K562 (cell line): ENCODE measurements at regions of chr3 and their contacts with region 1.

Region 1: GRCh38 chr3:45593708-45594609 is 592 bp upstream of the LIMD1 start:
- DNase-seq: peak; percentile 85 to 95 (median 94)
- ATAC-seq: peak; percentile 90
- H3K4me3 ChIP-seq: peak overlapping the region; percentile 71
- H3K27ac ChIP-seq: peak overlapping the region; percentile 83
- H3K4me1 ChIP-seq: peaks cover 34 to 57% of the 10 kb centered on the region in 2 experiments; a peak in 4 of 5 replicates
- H3K27me3 ChIP-seq: peaks cover 3 to 18% of the 10 kb centered on the region in 2 experiments; a peak in 3 of 5 replicates
- CTCF ChIP-seq: no peak
- EP300 ChIP-seq: no peak
- POLR2A ChIP-seq: peak; percentile 68
- RAD21 ChIP-seq: no peak

Region 2: GRCh38 chr3:45507820-45508317 is 86.1 kb before region 1 on chr3:
- CTCF ChIA-PET with region 1: interaction called, 4 read pairs
- POLR2A ChIA-PET with region 1: no interaction called
- in situ Hi-C with region 1: no loop called
- intact Hi-C with region 1: loop called (anchors 5 kb)
- DNase-seq: peak in 3 of 4 experiments; percentile 39 to 59 (median 55)
- ATAC-seq: peak; percentile 89
- H3K4me3 ChIP-seq: no peak overlapping the region
- H3K27ac ChIP-seq: no peak overlapping the region
- H3K4me1 ChIP-seq: 0 out of 5 replicates have a peak, but pooled peaks cover 0 to 6% of the 10 kb centered on the region in 2 experiments
- H3K27me3 ChIP-seq: no peaks in the 10 kb centered on the region
- CTCF ChIP-seq: peak; percentile 59 to 70 (median 62)
- EP300 ChIP-seq: no peak
- POLR2A ChIP-seq: no peak
- RAD21 ChIP-seq: peak; percentile 67 to 80

Region 3: GRCh38 chr3:45546716-45547701 is 47.0 kb before region 1 on chr3:
- CTCF ChIA-PET with region 1: no interaction called
- POLR2A ChIA-PET with region 1: interaction called, 6 read pairs
- in situ Hi-C with region 1: no loop called
- intact Hi-C with region 1: loop called (anchors 2 kb)
- DNase-seq: peak; percentile 74 to 86 (median 78)
- ATAC-seq: peak; percentile 52
- H3K4me3 ChIP-seq: no peak overlapping the region
- H3K27ac ChIP-seq: peak overlapping the region; percentile 74; the same call in 2 of the 3 replicates
- H3K4me1 ChIP-seq: peaks cover 25 to 51% of the 10 kb centered on the region in 2 experiments
- H3K27me3 ChIP-seq: no peaks in the 10 kb centered on the region
- CTCF ChIP-seq: peak; percentile 75 to 92 (median 85)
- EP300 ChIP-seq: no peak
- POLR2A ChIP-seq: no peak
- RAD21 ChIP-seq: peak in 1 of 2 experiments; percentile 66; a peak in 2 of 4 replicates

Region 4: DNA sequence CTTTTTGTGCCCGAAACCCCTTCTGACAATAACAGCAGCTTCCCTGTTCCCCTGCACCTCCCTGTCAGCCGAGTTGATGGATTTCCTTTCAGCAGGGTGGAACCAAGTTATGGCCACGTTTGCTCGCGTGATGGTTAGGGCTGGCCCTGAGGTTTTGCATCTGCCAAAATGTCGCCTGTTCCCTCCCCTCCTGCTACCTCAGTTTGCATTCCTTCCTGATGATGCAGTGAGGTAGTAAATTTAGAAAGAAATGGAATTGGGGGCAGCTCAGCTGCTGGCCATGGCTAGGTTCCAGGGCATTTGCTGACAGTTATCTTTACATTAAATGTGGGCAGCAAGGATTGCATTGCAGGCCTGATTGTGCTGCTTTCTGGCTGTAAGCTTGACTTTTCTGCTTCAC is 13.8 kb after region 1 on chr3:
- CTCF ChIA-PET with region 1: no interaction called
- POLR2A ChIA-PET with region 1: interaction called, 20 read pairs
- in situ Hi-C with region 1: no loop called
- intact Hi-C with region 1: no loop called
- DNase-seq: no peak
- ATAC-seq: no peak
- H3K4me3 ChIP-seq: no peak overlapping the region
- H3K27ac ChIP-seq: no peak overlapping the region
- H3K4me1 ChIP-seq: peaks cover 0 to 6% of the 10 kb centered on the region in 2 experiments; a peak in 1 of 5 replicates
- H3K27me3 ChIP-seq: no peaks in the 10 kb centered on the region
- CTCF ChIP-seq: no peak
- EP300 ChIP-seq: no peak
- POLR2A ChIP-seq: no peak
- RAD21 ChIP-seq: no peak

Region 5: GRCh38 chr3:45642731-45643152 is 48.8 kb after region 1 on chr3:
- CTCF ChIA-PET with region 1: no interaction called
- POLR2A ChIA-PET with region 1: interaction called, 4 read pairs
- in situ Hi-C with region 1: no loop called
- intact Hi-C with region 1: loop called (anchors 5 kb)
- DNase-seq: no peak
- ATAC-seq: no peak
- H3K4me3 ChIP-seq: no peak overlapping the region
- H3K27ac ChIP-seq: no peak overlapping the region
- H3K4me1 ChIP-seq: peaks cover 8 to 23% of the 10 kb centered on the region in 2 experiments
- H3K27me3 ChIP-seq: no peaks in the 10 kb centered on the region
- CTCF ChIP-seq: no peak
- EP300 ChIP-seq: no peak
- POLR2A ChIP-seq: no peak
- RAD21 ChIP-seq: no peak

Region 6: GRCh38 chr3:45701172-45701867 is 107.4 kb after region 1 on chr3:
- CTCF ChIA-PET with region 1: no interaction called
- POLR2A ChIA-PET with region 1: no interaction called
- in situ Hi-C with region 1: no loop called
- intact Hi-C with region 1: no loop called
- DNase-seq: no peak
- ATAC-seq: no peak
- H3K4me3 ChIP-seq: no peak overlapping the region
- H3K27ac ChIP-seq: no peak overlapping the region
- H3K4me1 ChIP-seq: no peaks in the 10 kb centered on the region
- H3K27me3 ChIP-seq: no peaks in the 10 kb centered on the region
- CTCF ChIP-seq: no peak
- EP300 ChIP-seq: no peak
- POLR2A ChIP-seq: no peak
- RAD21 ChIP-seq: no peak